AG04449 (cell line): ENCODE measurements at regions of chr10 and their contacts with region 1.

Region 1: GRCh38 chr10:6202684-6203330 is at the start of gene PFKFB3:
- DNase-seq: no peak
- H3K4me3 ChIP-seq: peak within 1 kb of the TSS; percentile 83
- CTCF ChIP-seq: peak; percentile 87

Region 2: GRCh38 chr10:5937016-5937531 is 265.7 kb before region 1 on chr10:
- CTCF ChIA-PET with region 1: no interaction called
- POLR2A ChIA-PET with region 1: no interaction called
- DNase-seq: no peak
- H3K4me3 ChIP-seq: no peak overlapping the region
- CTCF ChIP-seq: no peak

Region 3: GRCh38 chr10:6108603-6109443 is 94.0 kb before region 1 on chr10:
- CTCF ChIA-PET with region 1: interaction called, 36 read pairs
- POLR2A ChIA-PET with region 1: interaction called, 4 read pairs
- DNase-seq: no peak
- H3K4me3 ChIP-seq: no peak overlapping the region
- CTCF ChIP-seq: peak; percentile 30

Region 4: DNA sequence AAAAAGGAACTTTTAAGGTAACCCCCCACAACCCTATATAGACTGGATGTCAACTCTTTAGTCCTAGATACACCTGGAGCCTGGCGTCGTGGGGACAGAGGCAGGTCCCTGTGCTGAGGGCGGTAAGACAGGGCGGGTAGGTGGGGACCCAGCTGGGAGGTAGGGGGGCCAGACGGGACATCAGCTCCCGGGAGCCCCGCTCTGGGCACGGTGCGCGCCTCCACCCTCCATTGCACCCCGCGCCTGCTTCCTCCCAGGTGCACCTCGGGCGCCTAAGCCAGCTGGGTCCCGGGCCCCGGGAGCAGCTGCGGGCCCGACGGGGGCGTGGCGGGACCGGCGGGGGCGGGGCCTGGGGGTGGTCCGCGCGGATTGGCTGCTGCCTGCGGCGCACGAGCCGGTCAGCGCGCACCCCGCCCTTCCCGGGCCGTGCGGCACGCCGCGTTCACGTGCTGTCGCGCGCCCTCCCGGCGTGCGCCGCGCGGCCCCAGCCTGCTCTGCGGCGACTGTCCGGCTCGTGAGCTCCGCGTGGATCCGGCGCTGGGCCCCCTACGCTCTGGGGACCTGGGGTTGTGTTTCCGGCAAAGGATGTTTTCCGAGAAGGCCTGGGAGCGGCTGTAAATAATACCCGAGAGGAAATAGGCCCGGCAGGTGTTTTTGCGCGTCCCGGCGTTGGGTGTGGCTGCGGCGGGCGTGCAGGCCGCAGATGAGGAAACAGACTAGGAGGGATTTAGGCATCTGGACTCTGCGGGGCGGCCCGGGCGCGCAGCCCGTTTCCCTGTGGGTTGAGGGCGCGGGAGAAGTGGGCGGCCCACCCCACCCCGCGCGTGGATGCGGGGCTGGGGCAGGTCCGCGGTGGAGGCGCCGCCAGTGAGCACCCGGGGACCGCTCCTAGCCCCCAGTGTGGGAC is 39.2 kb before region 1 on chr10:
- CTCF ChIA-PET with region 1: interaction called, 20 read pairs
- POLR2A ChIA-PET with region 1: interaction called, 8 read pairs
- DNase-seq: no peak
- H3K4me3 ChIP-seq: peak overlapping the region; percentile 74
- CTCF ChIP-seq: no peak

Region 5: GRCh38 chr10:6178581-6178980 is 24.2 kb before region 1 on chr10:
- CTCF ChIA-PET with region 1: interaction called, 11 read pairs
- POLR2A ChIA-PET with region 1: interaction called, 3 read pairs
- DNase-seq: no peak
- H3K4me3 ChIP-seq: no peak overlapping the region
- CTCF ChIP-seq: no peak

Region 6: GRCh38 chr10:6218692-6219493 is 16.1 kb after region 1 on chr10:
- CTCF ChIA-PET with region 1: interaction called, 23 read pairs
- POLR2A ChIA-PET with region 1: interaction called, 24 read pairs
- DNase-seq: no peak
- H3K4me3 ChIP-seq: no peak overlapping the region
- CTCF ChIP-seq: no peak

Region 7: DNA sequence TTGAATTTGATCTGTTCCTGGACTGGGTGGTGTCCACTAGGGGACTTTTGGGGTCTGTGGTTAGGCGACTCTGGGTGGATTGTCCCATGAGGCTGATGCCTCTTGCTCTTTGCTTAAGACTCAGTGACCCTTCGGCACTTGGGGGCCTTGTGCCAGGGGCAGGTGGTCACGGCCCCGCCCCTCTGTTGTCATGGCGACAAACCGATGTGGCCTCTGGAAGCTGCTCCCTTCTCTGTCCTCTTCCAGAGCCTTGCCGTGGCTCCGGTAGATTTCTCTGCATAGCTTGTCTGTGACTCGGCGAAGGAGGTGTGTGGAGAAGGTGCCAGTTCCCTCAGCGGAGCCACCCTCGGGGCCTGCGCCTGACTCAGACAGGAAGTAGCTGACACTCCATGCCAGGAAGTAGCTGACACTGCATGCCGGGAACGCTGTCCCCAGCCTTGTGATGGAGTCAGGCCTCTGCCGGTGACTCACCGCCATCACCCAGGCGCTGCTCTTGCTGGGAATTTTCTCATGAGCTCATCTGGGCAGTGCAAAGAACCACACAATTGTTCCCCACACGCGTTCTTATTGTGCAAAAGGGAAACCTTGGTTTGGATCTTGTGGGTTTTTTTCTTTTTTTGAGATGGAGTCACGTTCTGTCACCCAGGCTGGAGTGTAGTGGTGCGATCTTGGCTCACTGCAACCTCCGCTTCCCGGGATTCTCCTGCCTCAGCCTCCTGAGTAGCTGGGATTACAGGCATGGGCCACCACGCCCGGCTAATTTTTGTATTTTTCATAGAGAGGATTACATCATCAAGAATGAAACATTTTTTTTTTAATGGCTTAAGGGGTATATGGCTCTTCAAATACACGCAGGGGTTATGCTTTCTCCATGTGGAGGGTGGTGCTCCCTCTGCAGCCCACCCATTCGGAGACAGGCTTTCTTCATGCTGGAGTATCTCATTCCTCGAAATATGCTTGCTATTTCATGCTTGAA is 72.5 kb after region 1 on chr10:
- CTCF ChIA-PET with region 1: interaction called, 3 read pairs
- POLR2A ChIA-PET with region 1: interaction called, 13 read pairs
- DNase-seq: peak; percentile 92
- H3K4me3 ChIP-seq: peak overlapping the region; percentile 40
- CTCF ChIP-seq: no peak

Region 8: DNA sequence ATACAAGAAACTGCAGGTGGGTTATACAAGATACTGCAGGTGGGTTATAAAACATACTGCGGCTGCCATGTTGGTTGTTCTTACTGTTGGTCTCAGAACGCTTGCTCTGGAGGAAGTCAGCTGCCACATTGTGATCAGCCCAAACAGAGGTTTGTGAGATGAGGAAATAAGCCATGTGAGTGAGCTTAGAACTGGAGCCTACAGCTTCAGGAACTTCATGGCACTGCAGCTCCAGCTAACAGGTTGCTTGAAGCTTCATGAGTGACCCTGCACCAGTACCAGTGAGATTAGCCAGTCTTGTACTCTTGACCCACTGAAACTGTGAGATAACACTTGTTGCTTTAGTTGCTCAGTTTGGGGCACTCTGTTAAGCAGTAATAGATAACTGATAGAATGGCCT is 451.8 kb after region 1 on chr10:
- CTCF ChIA-PET with region 1: no interaction called
- POLR2A ChIA-PET with region 1: no interaction called
- DNase-seq: no peak
- H3K4me3 ChIP-seq: no peak overlapping the region
- CTCF ChIP-seq: no peak